Heart left ventricle (tissue), 16 donors: ENCODE measurements at regions of chr4 and their contacts with region 1.

Region 1: GRCh38 chr4:189215574-189215973 is 725.1 kb upstream of the FRG1 start:
- DNase-seq: no peak
- ATAC-seq: peak in 3 of 4 donors; percentile 28 to 74 (median 63)
- H3K4me3 ChIP-seq: no peak overlapping the region
- H3K27ac ChIP-seq: no peak overlapping the region
- H3K4me1 ChIP-seq: no peaks in the 10 kb centered on the region
- H3K27me3 ChIP-seq: no peaks in the 10 kb centered on the region
- CTCF ChIP-seq: no peak
- POLR2A ChIP-seq: no peak

Region 2: DNA sequence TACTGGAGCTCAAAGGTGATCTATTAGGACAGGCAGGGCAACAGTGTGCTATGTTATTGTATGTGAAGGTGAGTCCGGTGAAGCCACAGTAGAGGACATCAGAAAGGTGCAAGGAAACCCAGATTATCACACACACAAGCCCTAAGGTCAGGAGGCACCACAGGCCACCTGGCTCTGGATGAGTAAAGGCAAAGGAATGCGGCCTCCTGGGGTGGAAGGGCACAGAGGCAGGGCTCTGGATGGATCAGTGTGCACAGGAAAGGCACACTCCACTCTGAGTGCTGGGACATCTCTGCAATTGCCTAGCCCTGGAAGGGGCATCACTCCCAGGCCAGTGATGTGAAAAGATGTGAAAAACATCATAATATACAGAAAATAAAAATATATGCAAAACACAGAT is 392.9 kb before region 1 on chr4:
- intact Hi-C with region 1: no loop called
- DNase-seq: no peak
- ATAC-seq: no peak
- H3K4me3 ChIP-seq: no peak overlapping the region
- H3K27ac ChIP-seq: no peak overlapping the region
- H3K4me1 ChIP-seq: no peaks in the 10 kb centered on the region
- H3K27me3 ChIP-seq: no peaks in the 10 kb centered on the region
- CTCF ChIP-seq: no peak
- POLR2A ChIP-seq: no peak

Region 3: GRCh38 chr4:189787216-189788031 is 571.9 kb after region 1 on chr4:
- intact Hi-C with region 1: loop called in 1 of 10 experiments (anchors 10 kb)
- DNase-seq: no peak
- ATAC-seq: no peak
- H3K4me3 ChIP-seq: no peak overlapping the region
- H3K27ac ChIP-seq: no peak overlapping the region
- H3K4me1 ChIP-seq: no peaks in the 10 kb centered on the region
- H3K27me3 ChIP-seq: no peaks in the 10 kb centered on the region
- CTCF ChIP-seq: no peak
- POLR2A ChIP-seq: no peak